HEK293 (cell line): ENCODE measurements at regions of chr11 and their contacts with region 1.

Region 1: DNA sequence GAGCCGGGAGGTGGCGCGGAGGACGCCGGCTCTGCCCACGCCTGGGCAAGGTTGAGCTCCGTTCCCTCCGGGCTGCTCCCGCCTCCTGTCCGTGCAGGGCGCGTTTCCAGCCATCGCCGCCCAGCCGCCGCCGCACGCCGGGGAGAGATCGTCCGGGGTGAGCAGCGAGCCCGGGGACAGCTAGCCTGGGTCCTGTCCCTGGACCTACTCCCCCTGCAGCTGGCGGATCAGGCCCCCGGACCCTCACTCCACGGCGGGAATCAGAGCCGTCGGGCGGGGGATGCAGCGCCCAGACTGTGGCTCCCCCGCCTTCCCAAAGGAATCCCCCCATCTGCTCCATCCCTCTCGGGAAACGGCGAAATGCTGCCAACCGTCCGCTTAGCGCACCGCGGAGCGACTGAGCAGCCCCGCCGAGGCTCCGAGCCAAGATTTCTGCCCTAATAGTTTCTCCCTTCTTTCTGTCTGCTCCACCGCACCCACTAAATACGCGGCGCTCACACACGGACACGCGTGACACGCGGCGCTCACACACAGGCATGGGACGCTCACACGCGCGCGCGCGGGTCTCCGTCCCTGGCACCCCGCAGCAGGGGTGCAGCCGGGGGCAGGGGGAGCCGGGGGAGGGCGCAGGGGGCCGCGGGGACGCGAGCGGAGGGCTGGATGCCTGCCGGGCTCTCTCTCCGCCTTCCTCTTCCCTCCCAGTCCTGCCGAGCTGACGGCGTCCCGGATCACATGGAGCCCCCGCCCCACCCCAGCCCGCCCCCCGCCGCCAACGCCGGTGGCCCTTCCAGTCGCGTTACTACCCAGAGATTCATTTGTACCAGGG is at the start of gene KCNJ5:
- H3K4me3 ChIP-seq: peak within 1 kb of the TSS; percentile 47
- H3K27ac ChIP-seq: peak within 1 kb of the TSS; percentile 56; the same call in 1 of the 2 replicates
- H3K4me1 ChIP-seq: no peaks in the 10 kb centered on the region; the same call in 1 of the 2 replicates
- CTCF ChIP-seq: no peak

Region 2: GRCh38 chr11:128905345-128906184 is 14.8 kb after region 1 on chr11:
- CTCF ChIA-PET with region 1: interaction called, 30 read pairs
- POLR2A ChIA-PET with region 1: interaction called, 4 read pairs
- H3K4me3 ChIP-seq: peak overlapping the region; percentile 51
- H3K27ac ChIP-seq: peak overlapping the region; percentile 75; the same call in 1 of the 2 replicates
- H3K4me1 ChIP-seq: 0 out of 2 replicates have a peak, but pooled peaks cover 3% of the 10 kb centered on the region
- CTCF ChIP-seq: no peak; the same call in 1 of the 2 replicates